IMR-90 (cell line): ENCODE measurements at regions of chr15 and their contacts with region 1.

Region 1: GRCh38 chr15:61051569-61052031 is 177.5 kb downstream of the RORA start:
- DNase-seq: peak; percentile 78
- ATAC-seq: peak; percentile 95
- H3K4me3 ChIP-seq: no peak overlapping the region
- H3K27ac ChIP-seq: no peak overlapping the region
- H3K4me1 ChIP-seq: peaks cover 15% of the 10 kb centered on the region
- H3K27me3 ChIP-seq: peaks cover 3% of the 10 kb centered on the region; the same call in 1 of the 2 replicates
- CTCF ChIP-seq: peak; percentile 88
- POLR2A ChIP-seq: no peak
- RAD21 ChIP-seq: peak; percentile 90

Region 2: DNA sequence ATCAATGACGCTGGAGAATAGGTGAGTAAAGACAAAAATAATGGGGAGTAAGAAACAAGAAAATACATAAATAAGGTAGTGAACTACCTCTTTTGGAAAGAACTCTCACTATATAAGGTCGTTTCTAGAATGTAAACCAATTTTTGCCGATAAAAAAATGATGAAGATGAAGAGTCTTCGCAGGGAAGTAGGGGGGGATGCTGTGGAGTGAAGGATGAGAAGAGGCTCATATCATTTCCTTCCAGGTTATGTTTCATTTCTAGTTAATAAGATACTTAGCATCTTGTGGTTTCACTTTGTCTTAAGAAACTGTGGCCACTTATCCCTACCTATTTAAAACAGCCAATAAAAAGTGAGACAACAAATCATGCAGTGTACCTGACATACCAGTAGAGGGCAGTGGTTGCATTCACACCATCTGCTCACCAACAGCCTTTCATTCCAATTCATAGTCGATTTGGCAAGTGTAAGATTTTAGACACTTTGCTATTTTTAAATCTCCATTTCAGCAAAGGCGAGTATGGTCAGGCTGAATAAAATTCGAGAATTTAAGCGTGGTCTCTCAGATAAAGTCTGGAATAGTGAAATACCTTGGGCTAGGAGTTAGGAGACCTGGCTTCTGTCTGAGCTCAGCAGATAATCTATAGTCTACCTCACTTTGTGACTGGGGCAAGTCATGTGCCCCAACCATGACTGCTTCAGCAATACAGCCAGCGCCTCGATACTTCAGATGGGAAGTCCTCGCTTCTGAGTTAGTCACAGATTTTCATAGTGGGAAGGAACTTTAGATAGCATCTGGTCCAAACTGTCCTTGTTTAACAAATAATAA is 543.8 kb before region 1 on chr15:
- CTCF ChIA-PET with region 1: no interaction called
- POLR2A ChIA-PET with region 1: no interaction called
- dilution Hi-C with region 1: no loop called
- in situ Hi-C with region 1: no loop called
- intact Hi-C with region 1: loop called (anchors 1 kb)
- DNase-seq: peak; percentile 77
- ATAC-seq: peak; percentile 98
- H3K4me3 ChIP-seq: no peak overlapping the region
- H3K27ac ChIP-seq: no peak overlapping the region
- H3K4me1 ChIP-seq: no peaks in the 10 kb centered on the region
- H3K27me3 ChIP-seq: no peaks in the 10 kb centered on the region
- CTCF ChIP-seq: peak; percentile 95
- POLR2A ChIP-seq: no peak
- RAD21 ChIP-seq: peak; percentile 87

Region 3: DNA sequence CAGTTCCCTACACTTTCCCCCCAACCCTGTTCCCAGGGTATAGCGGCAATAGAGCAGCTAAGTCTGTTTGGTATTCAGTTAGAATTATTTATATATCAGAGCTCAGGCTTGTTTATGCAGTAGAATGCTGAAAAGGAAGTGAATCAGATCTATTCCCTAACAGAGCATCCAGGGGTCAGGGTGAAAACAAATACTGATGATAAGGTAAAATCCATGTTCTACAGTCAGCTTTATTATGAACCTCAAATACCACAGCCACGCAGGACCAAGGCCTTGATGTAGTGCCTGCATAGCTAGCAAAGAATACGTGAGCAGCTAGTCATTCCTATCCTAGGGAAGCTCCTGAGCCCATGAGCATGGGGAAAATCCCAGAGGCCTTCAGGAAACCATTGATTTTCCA is 342.9 kb before region 1 on chr15:
- CTCF ChIA-PET with region 1: no interaction called
- POLR2A ChIA-PET with region 1: no interaction called
- dilution Hi-C with region 1: no loop called
- in situ Hi-C with region 1: no loop called
- intact Hi-C with region 1: loop called (anchors 5 kb)
- DNase-seq: peak; percentile 99
- ATAC-seq: peak; percentile 92
- H3K4me3 ChIP-seq: no peak overlapping the region
- H3K27ac ChIP-seq: peak overlapping the region; percentile 25; the same call in 1 of the 2 replicates
- H3K4me1 ChIP-seq: peaks cover 17% of the 10 kb centered on the region
- H3K27me3 ChIP-seq: no peaks in the 10 kb centered on the region
- CTCF ChIP-seq: no peak
- POLR2A ChIP-seq: no peak
- RAD21 ChIP-seq: peak; percentile 25; the same call in 1 of the 2 replicates

Region 4: DNA sequence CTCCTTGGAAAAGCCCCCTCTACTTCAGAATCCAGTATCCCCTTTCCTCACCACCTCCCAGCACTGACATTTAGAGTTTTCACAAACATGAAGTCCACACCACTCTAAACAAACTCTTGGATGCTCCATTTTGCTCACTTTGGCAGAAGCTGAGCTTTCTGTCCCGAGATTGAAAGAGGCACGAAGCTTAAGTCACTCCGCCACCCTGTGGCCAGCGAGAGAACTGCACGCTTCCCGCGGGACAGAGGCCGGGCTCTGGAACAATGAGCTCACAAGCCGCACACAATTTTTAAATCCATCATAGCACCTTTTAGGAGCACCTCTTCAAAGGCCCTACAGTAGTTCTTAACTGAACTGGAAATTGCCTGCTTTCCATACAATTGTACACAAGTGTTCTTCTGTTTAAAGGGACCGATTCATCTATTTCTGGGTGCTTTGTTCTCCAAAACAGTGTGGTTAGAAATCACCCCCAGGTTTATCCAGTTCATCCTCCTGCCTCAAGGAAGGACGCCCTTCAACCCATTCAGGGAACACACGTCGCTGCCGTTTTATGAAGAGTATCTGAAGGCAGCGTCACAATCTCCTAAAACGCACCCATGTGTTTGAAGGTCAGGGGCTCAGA is 782.6 kb after region 1 on chr15:
- CTCF ChIA-PET with region 1: no interaction called
- POLR2A ChIA-PET with region 1: no interaction called
- dilution Hi-C with region 1: no loop called
- in situ Hi-C with region 1: no loop called
- intact Hi-C with region 1: loop called (anchors 5 kb)
- DNase-seq: peak; percentile 72
- ATAC-seq: peak; percentile 89
- H3K4me3 ChIP-seq: no peak overlapping the region
- H3K27ac ChIP-seq: no peak overlapping the region
- H3K4me1 ChIP-seq: no peaks in the 10 kb centered on the region
- H3K27me3 ChIP-seq: peaks cover 14% of the 10 kb centered on the region
- CTCF ChIP-seq: peak; percentile 92
- POLR2A ChIP-seq: no peak
- RAD21 ChIP-seq: peak; percentile 78